OCI-LY7 (cell line): ENCODE measurements at regions of chr16 and their contacts with region 1.

Region 1: DNA sequence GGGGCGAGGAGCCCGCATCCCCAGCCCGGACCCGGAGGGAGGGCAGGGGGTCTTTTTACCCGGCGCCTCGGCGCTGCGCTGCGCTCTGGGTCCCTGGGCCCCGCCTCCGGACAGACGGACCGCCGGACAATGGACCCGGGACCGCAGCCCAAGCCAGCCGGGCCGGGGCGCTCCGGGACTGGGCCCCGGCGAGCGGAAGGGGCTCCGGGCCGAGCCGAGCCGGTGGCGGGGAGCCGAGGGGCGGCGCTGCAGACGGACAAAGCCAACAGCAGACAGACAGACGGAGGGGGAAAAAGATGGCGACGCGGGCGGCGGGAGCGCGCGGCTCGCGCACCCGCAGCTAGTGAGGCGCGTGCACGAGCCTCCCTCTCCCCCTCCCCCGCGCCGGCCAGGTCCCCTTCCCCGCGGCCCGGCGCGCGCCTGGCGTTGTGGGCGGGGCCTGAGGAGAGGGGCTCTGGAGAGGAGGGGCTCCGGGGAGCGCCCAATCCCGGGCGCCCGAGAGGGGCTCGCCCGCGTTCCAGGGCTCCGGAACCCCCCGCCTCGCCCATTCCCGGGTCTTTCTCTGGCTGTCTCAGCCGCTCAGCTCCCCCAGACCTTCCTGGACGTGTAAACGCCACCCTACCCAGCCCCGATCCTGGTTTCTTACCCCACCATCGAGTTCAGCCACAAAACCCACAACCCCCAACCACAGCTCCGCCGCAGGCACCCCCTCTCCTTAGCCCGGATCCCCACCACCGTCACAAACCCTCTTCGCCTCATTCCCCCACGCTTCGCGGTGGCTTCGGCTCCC is at the start of gene ZNF821:
- DNase-seq: peak; percentile 91
- H3K4me3 ChIP-seq: peak within 1 kb of the TSS; percentile 95
- H3K27ac ChIP-seq: peak within 1 kb of the TSS; percentile 63
- H3K4me1 ChIP-seq: peaks cover 44% of the 10 kb centered on the region
- CTCF ChIP-seq: peak; percentile 77
- total RNA-seq, gene ZNF821: 10.5 and 14.6 TPM in 2 replicates

Region 2: DNA sequence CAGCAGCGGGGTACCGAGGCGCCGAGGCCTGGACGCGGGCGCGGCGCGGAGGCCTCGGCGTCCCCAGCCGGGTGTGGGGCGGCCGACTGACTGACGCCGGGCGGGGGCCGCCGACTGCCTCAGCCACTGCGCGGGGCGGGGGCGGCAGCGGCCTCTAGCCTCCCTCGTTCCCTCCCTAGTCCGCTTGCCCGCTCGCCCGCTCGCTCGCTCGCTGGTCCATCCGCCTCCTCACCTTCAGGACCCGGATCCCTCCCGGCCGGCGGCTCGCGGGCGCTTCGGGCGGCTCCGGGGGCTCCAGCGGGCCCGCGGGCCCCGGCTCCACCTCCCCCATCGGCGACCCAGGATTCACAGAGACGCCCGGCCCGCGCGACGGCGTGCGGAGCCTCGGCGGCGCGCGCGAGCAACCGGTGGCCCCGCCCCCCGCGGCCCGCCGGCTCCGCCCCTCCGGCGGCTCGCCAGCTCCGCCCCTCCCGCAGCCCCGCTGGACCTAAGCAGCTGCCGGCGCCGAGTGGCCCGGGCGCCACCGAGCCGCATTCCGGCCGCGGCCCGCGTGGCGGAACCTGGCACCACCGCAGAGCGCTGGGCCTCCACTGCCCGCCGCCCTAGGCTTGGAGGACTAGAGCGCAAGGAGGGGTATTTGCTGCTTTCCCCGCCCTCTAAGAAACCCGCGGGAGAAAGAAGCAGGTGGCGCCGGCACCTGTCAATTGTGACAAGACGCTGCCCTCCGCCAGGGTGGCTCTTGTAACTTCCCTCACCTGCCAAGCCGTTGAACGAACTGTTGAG is 160.3 kb before region 1 on chr16:
- CTCF ChIA-PET with region 1: no interaction called
- POLR2A ChIA-PET with region 1: interaction called, 4 read pairs
- intact Hi-C with region 1: loop called (anchors 2 kb)
- DNase-seq: peak; percentile 88
- H3K4me3 ChIP-seq: peak overlapping the region; percentile 94
- H3K27ac ChIP-seq: peak overlapping the region; percentile 66
- H3K4me1 ChIP-seq: peaks cover 52% of the 10 kb centered on the region
- CTCF ChIP-seq: peak; percentile 28; the same call in 1 of the 2 replicates

Region 3: GRCh38 chr16:71794943-71795342 is 89.1 kb before region 1 on chr16:
- CTCF ChIA-PET with region 1: no interaction called
- POLR2A ChIA-PET with region 1: no interaction called
- intact Hi-C with region 1: no loop called
- DNase-seq: no peak
- H3K4me3 ChIP-seq: no peak overlapping the region
- H3K27ac ChIP-seq: no peak overlapping the region
- H3K4me1 ChIP-seq: no peaks in the 10 kb centered on the region
- CTCF ChIP-seq: no peak

Region 4: DNA sequence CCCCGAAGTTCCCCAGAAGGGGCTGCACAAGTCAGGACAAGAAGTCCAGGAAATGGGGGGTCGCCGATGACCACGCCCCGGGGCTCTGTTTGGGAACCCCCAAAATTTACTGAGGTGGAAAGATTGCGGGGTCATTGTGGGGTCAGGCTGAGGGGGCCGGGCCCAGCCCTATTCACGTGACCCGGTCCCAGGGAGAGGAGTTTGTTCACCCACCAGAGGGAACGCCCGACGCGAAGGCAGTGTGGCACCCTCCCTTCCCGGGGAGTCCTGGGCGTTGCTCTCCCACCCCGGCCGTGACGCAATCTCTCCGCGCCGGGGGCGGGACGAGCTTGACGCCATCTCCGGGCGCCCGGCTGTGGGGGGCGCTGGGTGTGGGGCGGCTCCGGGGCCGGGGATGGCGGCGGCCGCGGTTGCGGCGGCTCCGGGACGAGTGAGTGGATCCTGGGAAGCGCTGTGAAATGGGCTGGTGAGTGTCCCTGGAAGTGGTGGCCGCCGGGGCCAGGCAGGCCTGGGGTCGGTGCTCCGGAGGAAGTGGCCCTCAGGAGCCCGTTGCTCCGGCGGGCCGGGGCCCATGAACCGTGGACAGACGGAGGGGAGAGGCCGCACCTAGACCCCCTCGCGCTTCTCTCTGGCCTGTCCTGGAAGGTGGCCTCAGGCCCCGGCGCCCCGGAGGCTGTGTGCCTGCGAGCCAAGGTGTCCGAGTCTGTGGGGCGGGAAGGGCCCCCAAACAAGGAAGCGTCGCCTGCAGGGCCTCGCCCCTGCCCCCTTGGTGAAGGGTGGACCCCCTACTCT is 38.2 kb before region 1 on chr16 and contains the start of gene ATXN1L:
- CTCF ChIA-PET with region 1: no interaction called
- POLR2A ChIA-PET with region 1: interaction called, 4 read pairs
- intact Hi-C with region 1: loop called (anchors 2 kb)
- DNase-seq: peak; percentile 94
- H3K4me3 ChIP-seq: peak within 1 kb of the TSS; percentile 89
- H3K27ac ChIP-seq: peak within 1 kb of the TSS; percentile 18
- H3K4me1 ChIP-seq: peaks cover 32% of the 10 kb centered on the region
- CTCF ChIP-seq: no peak
- total RNA-seq, gene ATXN1L: 12.5 and 12.8 TPM in 2 replicates

Region 5: DNA sequence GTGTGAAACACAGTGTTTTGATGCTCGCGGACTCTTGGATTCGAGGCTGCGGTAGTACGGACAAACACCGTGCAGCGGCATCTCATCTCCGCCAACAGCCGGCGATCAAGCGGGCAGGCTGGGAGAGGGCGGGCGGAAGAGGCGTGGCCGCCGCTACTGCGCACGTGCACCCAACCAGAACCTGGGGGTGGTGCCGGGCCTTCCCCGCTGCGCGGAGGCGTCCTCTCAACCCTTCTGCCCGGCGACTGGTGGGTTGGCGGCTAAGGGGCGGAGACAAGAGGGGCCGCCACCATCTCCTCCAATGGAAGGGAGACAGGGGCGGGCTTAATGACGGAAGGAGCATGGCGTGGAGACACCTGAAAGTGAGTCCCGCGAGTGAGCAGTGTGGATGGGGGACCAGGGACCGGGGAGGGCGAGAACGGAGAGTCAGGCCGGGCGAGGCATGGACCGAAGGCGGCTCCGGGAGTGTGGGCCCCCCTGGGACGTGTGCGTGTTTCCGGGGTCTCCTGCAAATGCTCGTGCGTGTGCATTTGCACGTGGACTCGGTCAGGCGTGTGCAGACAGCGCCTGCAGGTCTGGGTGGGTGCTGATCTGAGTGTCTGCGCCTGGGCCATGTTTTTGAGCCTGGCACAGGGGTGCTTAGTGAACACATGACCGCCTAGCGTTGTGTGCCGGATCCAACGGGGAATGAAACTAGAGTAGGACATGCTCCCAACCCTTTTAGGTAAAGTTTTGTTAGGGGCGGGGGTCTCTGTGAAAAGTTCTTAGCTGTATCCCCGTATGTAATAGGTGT is 124.6 kb after region 1 on chr16 and contains the start of gene DHODH:
- CTCF ChIA-PET with region 1: no interaction called
- POLR2A ChIA-PET with region 1: no interaction called
- intact Hi-C with region 1: loop called (anchors 2 kb)
- DNase-seq: peak; percentile 98
- H3K4me3 ChIP-seq: peak within 1 kb of the TSS; percentile 79
- H3K27ac ChIP-seq: peak within 1 kb of the TSS; percentile 52
- H3K4me1 ChIP-seq: peaks cover 6% of the 10 kb centered on the region
- CTCF ChIP-seq: no peak
- total RNA-seq, gene DHODH: 12.3 and 15.7 TPM in 2 replicates